ENCODE measurements at regions of chr2 and their contacts with region 1.

Region 1: DNA sequence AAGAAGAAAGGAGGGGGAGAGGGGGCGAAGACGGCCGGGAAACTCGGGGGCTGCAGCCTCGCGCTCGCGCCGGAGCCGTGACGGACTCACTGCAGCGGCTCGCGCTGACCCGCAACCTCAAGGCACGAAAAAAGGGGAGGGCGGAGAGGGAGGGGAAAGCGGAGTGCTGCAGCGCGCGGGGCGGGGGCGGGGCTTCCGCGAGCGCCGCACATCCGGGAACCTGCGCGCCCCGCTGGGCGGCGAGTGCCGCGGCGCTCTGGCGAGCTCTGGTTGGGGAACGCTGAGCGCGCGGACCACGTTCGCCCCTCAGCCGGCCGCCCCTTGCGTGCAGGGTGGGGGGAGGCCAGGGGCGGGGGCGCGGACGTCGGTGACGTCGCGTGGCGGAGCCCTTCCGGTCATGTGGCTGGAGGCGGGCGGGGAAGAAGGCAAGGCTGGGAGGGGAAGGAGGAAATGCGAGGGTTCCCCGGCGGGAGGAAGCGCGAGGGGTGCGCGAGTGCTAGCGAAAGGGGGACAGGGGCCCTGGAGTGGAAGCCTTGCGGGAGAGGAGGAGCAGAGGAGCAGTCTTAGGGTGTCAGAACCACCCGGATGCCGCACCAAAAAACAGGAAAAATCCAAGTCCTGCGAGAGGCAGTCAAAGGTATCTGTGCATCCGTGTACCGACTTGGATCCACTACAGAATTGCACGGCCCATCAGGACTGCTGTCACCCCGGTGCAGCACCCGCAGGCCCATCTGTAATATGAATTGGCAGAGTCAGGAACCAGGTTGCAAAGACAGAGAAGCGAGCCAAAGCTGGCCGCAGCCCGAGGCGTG is at the start of gene PPP3R1:
- DNase-seq: peak; percentile 95
- ATAC-seq: peak; percentile 89
- H3K4me3 Mint-ChIP-seq: peak within 1 kb of the TSS; percentile 98
- H3K27ac Mint-ChIP-seq: peak within 1 kb of the TSS; percentile 97
- H3K4me1 Mint-ChIP-seq: peaks cover 26% of the 10 kb centered on the region
- H3K27me3 Mint-ChIP-seq: no peaks in the 10 kb centered on the region
- total RNA-seq, gene PPP3R1: 65.4 to 66.0 TPM

Region 2: GRCh38 chr2:68157402-68158133 is 95.0 kb before region 1 on chr2 and contains the start of gene PNO1:
- POLR2A ChIA-PET with region 1: interaction called, 12 read pairs
- DNase-seq: peak; percentile 95
- ATAC-seq: peak; percentile 86
- H3K4me3 Mint-ChIP-seq: peak within 1 kb of the TSS; percentile 88
- H3K27ac Mint-ChIP-seq: peak within 1 kb of the TSS; percentile 100
- H3K4me1 Mint-ChIP-seq: peaks cover 27% of the 10 kb centered on the region
- H3K27me3 Mint-ChIP-seq: no peaks in the 10 kb centered on the region
- total RNA-seq, gene PNO1: 8.5 to 9.2 TPM

Region 3: DNA sequence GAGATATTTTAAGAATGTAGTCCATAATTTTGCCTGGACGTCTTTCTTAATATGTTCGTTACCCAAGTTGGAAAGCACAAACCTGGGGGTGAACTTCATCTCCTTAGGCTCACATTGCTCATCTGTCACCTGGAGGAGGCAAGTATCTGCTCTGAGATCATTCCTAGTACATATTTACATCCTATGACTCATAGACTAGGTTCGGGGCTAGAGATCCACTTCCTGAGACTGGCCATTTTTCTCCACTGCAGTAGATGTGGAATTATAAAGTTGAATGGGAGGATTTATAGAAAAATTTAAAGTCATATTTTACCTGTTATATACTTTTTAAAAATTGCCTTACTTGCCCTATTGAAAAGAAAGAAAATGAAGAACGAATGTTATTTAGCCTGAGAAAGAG is 313.2 kb after region 1 on chr2:
- POLR2A ChIA-PET with region 1: no interaction called
- DNase-seq: no peak
- ATAC-seq: no peak
- H3K4me3 Mint-ChIP-seq: no peak overlapping the region
- H3K27ac Mint-ChIP-seq: no peak overlapping the region
- H3K4me1 Mint-ChIP-seq: no peaks in the 10 kb centered on the region
- H3K27me3 Mint-ChIP-seq: no peaks in the 10 kb centered on the region